ENCODE measurements at regions of chr17 and their contacts with region 1.

Region 1: GRCh38 chr17:47949136-47949759 is 7.9 kb downstream of the PNPO start:
- DNase-seq: peak; percentile 88 to 92
- ATAC-seq: peak; percentile 78 to 93 (median 88)
- H3K4me3 ChIP-seq: peak overlapping the region in 8 of 10 donors; percentile 15 to 49 (median 37)
- H3K27ac ChIP-seq: peak overlapping the region in 9 of 10 donors; percentile 58 to 83 (median 68)
- H3K4me1 ChIP-seq: peaks cover 5 to 47% (median 30%) of the 10 kb centered on the region in 9 donors
- H3K27me3 ChIP-seq: no peaks in the 10 kb centered on the region
- CTCF ChIP-seq: peak; percentile 73 to 97 (median 93)

Region 2: GRCh38 chr17:47889734-47890529 is 59.3 kb before region 1 on chr17:
- intact Hi-C with region 1: loop called in 8 of 10 experiments (anchors 2 to 10 kb)
- DNase-seq: peak; percentile 87 to 89
- ATAC-seq: peak; percentile 85 to 94 (median 92)
- H3K4me3 ChIP-seq: no peak overlapping the region
- H3K27ac ChIP-seq: no peak overlapping the region
- H3K4me1 ChIP-seq: peaks cover 0 to 17% (median 8%) of the 10 kb centered on the region in 9 donors
- H3K27me3 ChIP-seq: no peaks in the 10 kb centered on the region
- CTCF ChIP-seq: peak; percentile 93 to 98 (median 96)

Region 3: DNA sequence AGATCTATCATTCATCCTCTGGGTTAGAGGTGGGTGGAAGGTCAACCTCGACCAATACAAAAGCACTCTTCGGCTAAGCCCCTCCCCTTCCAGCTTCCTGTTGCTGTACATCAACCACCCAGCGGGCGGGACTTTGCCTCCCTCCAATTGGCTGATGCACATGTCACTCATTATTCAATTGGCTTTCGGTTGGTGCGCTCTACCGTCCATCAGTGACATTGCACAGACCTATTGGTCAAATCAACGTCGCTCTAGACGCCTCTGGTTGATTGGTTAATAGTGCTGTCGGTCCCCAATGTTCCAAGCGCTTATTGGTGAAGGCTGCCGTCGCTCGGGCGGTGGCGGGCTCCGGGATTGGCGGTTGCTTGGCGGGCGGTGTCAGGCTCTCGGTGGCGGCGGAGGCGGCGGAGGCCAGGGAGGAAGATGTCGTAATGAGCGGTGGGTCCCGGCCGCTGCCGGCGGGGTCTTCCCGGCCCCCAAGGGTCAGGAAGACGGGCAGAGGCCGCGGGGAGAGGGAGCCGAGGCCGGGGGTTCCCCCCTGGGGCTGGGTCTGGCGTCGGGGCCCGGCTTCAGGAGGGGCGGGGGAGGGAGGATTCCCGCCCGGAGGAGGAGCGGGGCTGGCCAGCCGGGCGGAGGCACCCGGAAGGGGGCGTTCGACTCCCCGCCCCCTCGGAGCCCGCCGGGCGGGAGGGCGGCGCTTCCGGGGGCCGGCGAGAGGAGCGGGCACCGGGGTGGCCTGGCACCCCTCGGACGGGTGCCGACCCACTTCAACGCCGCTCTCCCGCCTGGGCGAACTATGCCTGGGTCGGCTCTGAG is 53.2 kb before region 1 on chr17 and contains the start of gene SP2:
- intact Hi-C with region 1: loop called in 8 of 10 experiments (anchors 2 to 10 kb)
- DNase-seq: peak; percentile 98 to 100
- ATAC-seq: peak; percentile 93 to 96 (median 96)
- H3K4me3 ChIP-seq: peak within 1 kb of the TSS; percentile 53 to 98 (median 80)
- H3K27ac ChIP-seq: peak within 1 kb of the TSS; percentile 96 to 100 (median 99)
- H3K4me1 ChIP-seq: peaks cover 10 to 58% (median 53%) of the 10 kb centered on the region in 9 donors
- H3K27me3 ChIP-seq: no peaks in the 10 kb centered on the region
- CTCF ChIP-seq: peak in 5 of 9 donors; percentile 13 to 47 (median 30)
- total RNA-seq, gene SP2: 13.0 to 18.3 (median 15.9) TPM

Region 4: DNA sequence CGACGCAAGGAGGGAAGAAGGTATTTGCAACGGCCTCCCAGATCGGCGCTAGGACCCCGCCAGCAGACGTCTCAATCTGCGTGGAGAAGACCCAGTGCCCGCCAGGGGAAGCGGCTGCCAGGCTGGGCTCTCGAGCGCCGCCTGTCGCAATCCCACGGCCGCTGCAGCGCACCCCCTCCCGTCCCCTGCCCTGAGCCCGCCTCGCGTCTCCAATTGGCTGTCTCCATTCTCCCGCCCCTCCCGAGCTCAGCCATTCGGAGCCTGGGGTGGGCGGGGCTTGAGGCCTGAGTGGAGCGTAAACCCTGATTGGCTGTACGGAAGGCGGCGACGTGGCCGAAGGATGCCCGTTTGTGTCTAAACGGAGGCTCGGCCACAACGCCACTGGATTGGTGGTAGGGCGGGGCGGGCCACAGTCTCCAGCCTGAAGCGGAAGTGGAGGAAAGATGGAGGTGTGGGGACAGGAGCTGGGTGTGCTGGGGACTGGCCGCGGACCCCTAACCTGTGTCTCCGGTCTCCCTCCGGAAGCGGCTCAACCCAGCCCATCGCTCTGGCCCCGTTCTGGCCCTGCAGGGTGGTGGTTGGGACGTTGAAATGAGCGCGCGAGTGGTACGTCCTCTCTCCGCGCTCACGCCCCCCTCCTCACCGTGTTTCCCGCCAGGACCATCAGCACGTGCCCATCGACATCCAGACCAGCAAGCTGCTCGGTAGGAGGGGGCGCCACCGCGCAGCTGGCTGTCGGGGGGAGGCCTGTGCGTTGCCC is 21.6 kb after region 1 on chr17 and contains the start of gene CDK5RAP3:
- intact Hi-C with region 1: loop called in 4 of 10 experiments (anchors 1 to 2 kb)
- DNase-seq: peak; percentile 100
- ATAC-seq: peak; percentile 99 to 100 (median 100)
- H3K4me3 ChIP-seq: peak within 1 kb of the TSS; percentile 62 to 98 (median 92)
- H3K27ac ChIP-seq: peak within 1 kb of the TSS in 9 of 10 donors; percentile 47 to 91 (median 84)
- H3K4me1 ChIP-seq: peaks cover 4 to 24% (median 15%) of the 10 kb centered on the region in 9 donors
- H3K27me3 ChIP-seq: no peaks in the 10 kb centered on the region
- CTCF ChIP-seq: peak in 8 of 9 donors; percentile 88 to 100 (median 96)
- total RNA-seq, gene CDK5RAP3: 44.0 to 71.2 (median 62.3) TPM

Region 5: GRCh38 chr17:48074315-48075081 is 125.2 kb after region 1 on chr17:
- intact Hi-C with region 1: no loop called
- DNase-seq: peak; percentile 52 to 84
- ATAC-seq: peak in 7 of 8 donors; percentile 78 to 92 (median 89)
- H3K4me3 ChIP-seq: no peak overlapping the region
- H3K27ac ChIP-seq: peak overlapping the region in 3 of 10 donors; percentile 7 to 45 (median 28)
- H3K4me1 ChIP-seq: peaks cover 0 to 10% (median 5%) of the 10 kb centered on the region in 9 donors
- H3K27me3 ChIP-seq: no peaks in the 10 kb centered on the region
- CTCF ChIP-seq: peak; percentile 73 to 92 (median 85)

Measured in heart right ventricle (tissue), 16 donors.